ENCODE measurements at regions of chr2 and their contacts with region 1.

Region 1: DNA sequence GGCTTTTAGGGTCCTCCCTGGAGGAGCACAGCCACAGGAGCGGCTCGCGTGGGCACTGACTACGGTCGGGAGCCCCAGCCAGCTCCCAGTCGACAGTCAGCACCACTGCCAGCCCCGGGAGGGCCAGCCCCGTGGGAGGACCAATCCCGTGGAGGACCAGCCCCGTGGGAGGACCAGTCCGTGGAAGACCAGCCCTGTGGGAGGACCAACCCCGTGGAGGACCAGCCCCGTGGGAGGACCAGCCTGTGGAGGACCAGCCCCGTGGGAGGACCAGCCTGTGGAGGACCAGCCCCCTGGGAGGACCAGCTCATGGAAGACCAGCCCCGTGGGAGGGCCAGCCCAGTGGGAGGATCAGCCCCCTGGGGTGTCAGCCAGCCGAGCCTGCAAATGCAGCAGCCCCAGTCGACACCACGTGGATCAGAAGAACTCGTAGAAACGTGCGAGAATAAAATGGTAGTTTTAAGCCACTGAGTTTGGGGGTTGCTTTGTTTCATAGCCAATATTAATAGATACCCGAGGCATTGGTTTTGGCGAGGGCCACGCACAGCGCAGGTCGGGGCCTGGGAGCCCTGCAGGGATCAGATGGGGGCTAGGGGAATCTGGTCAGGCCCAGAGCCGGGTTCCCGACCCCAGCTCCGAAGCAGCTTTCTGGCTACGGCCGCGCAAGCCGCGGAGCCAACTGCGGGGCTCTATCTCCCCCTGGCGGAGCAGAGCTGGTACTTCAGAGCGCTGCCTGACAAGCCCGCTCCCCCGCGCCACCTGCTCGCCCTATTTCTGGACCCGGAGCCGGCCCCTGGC is 73.0 kb downstream of the TEX51 start:
- DNase-seq: peak; percentile 58
- ATAC-seq: peak; percentile 92
- H3K4me3 ChIP-seq: peak overlapping the region; percentile 31 to 65 (median 32); a peak in 5 of 6 replicates
- H3K27ac ChIP-seq: no peak overlapping the region
- H3K4me1 ChIP-seq: peaks cover 63% of the 10 kb centered on the region
- H3K27me3 ChIP-seq: peaks cover 2 to 22% of the 10 kb centered on the region in 2 experiments; a peak in 4 of 5 replicates
- CTCF ChIP-seq: peak; percentile 96
- EP300 ChIP-seq: no peak
- POLR2A ChIP-seq: no peak
- RAD21 ChIP-seq: peak; percentile 99

Region 2: GRCh38 chr2:125745514-125745913 is 1226.2 kb before region 1 on chr2:
- CTCF ChIA-PET with region 1: no interaction called
- POLR2A ChIA-PET with region 1: no interaction called
- in situ Hi-C with region 1: no loop called
- intact Hi-C with region 1: loop called (anchors 10 kb)
- DNase-seq: peak; percentile 49
- ATAC-seq: peak; percentile 94
- H3K4me3 ChIP-seq: no peak overlapping the region
- H3K27ac ChIP-seq: no peak overlapping the region
- H3K4me1 ChIP-seq: no peaks in the 10 kb centered on the region
- H3K27me3 ChIP-seq: no peaks in the 10 kb centered on the region
- CTCF ChIP-seq: peak; percentile 70
- EP300 ChIP-seq: no peak
- POLR2A ChIP-seq: no peak
- RAD21 ChIP-seq: no peak

Region 3: GRCh38 chr2:126227250-126227649 is 744.4 kb before region 1 on chr2:
- CTCF ChIA-PET with region 1: no interaction called
- POLR2A ChIA-PET with region 1: no interaction called
- in situ Hi-C with region 1: no loop called
- intact Hi-C with region 1: loop called (anchors 5 kb)
- DNase-seq: no peak
- ATAC-seq: peak; percentile 71
- H3K4me3 ChIP-seq: no peak overlapping the region
- H3K27ac ChIP-seq: no peak overlapping the region
- H3K4me1 ChIP-seq: no peaks in the 10 kb centered on the region
- H3K27me3 ChIP-seq: no peaks in the 10 kb centered on the region
- CTCF ChIP-seq: peak; percentile 17; the same call in 1 of the 2 replicates
- EP300 ChIP-seq: no peak
- POLR2A ChIP-seq: no peak
- RAD21 ChIP-seq: no peak

Region 4: DNA sequence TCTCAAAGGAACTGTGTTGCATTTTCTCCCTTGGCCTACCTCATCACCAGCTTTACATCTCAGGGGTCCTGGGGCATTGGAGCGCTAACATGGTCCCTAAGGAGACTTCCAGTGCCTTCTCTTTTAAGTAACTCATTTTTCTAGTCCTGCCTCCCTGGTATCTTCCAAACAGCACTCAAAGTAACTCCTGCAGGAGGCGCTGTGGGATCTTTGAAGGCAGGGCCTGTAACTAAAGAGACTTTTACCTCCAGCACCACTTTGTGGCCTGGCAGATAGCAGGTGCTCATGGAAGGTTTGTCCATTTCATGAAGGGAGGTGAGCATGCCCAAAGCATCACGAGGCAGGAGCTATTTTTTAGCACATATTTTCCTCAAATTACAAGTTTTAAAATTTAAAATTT is 726.7 kb before region 1 on chr2:
- CTCF ChIA-PET with region 1: no interaction called
- POLR2A ChIA-PET with region 1: no interaction called
- in situ Hi-C with region 1: no loop called
- intact Hi-C with region 1: loop called (anchors 1 kb)
- DNase-seq: peak; percentile 61
- ATAC-seq: peak; percentile 96
- H3K4me3 ChIP-seq: no peak overlapping the region
- H3K27ac ChIP-seq: no peak overlapping the region
- H3K4me1 ChIP-seq: no peaks in the 10 kb centered on the region
- H3K27me3 ChIP-seq: no peaks in the 10 kb centered on the region
- CTCF ChIP-seq: peak; percentile 75
- EP300 ChIP-seq: no peak
- POLR2A ChIP-seq: no peak
- RAD21 ChIP-seq: peak; percentile 68

Region 5: DNA sequence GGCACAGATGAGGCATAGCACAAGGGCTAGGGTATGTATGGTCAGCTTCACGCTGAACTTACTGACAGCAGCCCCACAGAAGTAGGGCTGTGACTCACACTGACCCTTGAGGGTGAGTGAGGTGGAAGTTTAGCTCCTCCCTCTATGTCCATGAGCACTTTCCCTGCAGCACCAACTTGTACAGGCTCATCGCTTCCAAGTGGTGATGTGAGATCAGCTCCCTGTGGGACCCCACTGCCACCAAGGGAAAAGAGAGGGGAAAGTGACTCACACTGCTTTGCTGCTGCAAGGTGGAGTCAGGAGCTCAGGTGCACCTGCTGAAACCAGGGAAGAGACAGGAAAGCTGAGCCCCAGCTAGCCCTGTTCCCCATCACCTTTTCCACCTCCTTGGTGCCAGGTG is 18.5 kb after region 1 on chr2:
- CTCF ChIA-PET with region 1: interaction called, 3 read pairs
- POLR2A ChIA-PET with region 1: interaction called, 19 read pairs
- in situ Hi-C with region 1: no loop called
- intact Hi-C with region 1: no loop called
- DNase-seq: peak; percentile 15
- ATAC-seq: peak; percentile 76
- H3K4me3 ChIP-seq: peak overlapping the region in 1 of 3 experiments; percentile 60; a peak in 2 of 6 replicates
- H3K27ac ChIP-seq: peak overlapping the region; percentile 84
- H3K4me1 ChIP-seq: peaks cover 95% of the 10 kb centered on the region
- H3K27me3 ChIP-seq: no peaks in the 10 kb centered on the region
- CTCF ChIP-seq: no peak
- EP300 ChIP-seq: no peak
- POLR2A ChIP-seq: 0 out of 4 replicates have a peak, but pooled peaks of 1 of the 2 experiments have one; percentile 20
- RAD21 ChIP-seq: no peak

Region 6: GRCh38 chr2:126995621-126996377 is 24.1 kb after region 1 on chr2:
- CTCF ChIA-PET with region 1: interaction called, 4 read pairs
- POLR2A ChIA-PET with region 1: interaction called, 19 read pairs
- in situ Hi-C with region 1: no loop called
- intact Hi-C with region 1: loop called (anchors 1 kb)
- DNase-seq: peak; percentile 33
- ATAC-seq: peak; percentile 10
- H3K4me3 ChIP-seq: peak overlapping the region in 1 of 3 experiments; percentile 44; a peak in 1 of 6 replicates
- H3K27ac ChIP-seq: peak overlapping the region; percentile 90
- H3K4me1 ChIP-seq: peaks cover 85% of the 10 kb centered on the region
- H3K27me3 ChIP-seq: no peaks in the 10 kb centered on the region
- CTCF ChIP-seq: peak; percentile 42
- EP300 ChIP-seq: no peak
- POLR2A ChIP-seq: peak in 1 of 2 experiments; percentile 42; a peak in 1 of 4 replicates
- RAD21 ChIP-seq: no peak; the same call in 1 of the 2 replicates

Region 7: DNA sequence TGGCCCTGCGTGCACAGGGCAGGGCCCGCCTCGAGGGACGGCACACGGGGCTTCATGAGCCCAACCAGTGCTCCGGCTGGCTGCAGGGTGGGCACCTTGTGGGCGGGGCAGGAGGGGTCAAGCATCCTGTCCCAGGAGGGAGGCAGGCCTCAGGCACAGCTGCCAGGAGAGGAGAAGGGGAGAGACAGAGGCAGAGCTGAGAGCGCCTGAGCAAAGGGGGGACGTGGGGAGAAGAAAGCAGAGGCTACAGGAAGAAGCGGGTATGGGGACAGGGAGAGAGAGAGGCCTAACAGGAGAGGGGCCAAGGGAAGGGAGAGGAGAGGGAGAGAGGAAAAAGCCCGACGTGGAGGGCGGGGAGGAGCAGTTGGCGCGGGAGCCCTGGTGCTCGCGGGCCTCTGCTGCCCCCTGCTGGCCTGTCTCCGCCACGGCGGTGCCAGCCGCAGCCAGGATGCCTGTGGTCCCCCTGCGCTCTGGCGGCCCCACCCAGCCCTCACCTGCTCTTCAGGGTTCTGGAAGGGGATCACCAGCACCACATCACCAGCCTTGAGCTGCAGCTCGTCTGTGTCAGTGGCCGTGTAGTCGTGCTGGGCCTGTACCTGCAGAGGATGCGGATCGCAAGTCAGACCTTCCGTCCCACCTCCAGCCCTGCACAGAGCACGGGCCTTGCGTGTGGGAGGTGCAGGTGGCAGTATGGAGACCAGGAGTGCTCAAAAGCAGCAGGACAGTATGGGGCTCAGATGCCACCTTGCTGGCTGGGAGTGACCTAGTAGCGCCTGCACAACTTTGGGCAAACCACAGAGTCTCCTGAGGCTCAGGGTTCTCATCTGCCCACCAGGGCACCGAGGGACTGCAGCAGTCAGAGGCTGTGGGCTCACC is 78.5 kb after region 1 on chr2:
- CTCF ChIA-PET with region 1: interaction called, 3 read pairs
- POLR2A ChIA-PET with region 1: no interaction called
- in situ Hi-C with region 1: no loop called
- intact Hi-C with region 1: loop called (anchors 1 kb)
- DNase-seq: peak; percentile 24
- ATAC-seq: peak; percentile 86
- H3K4me3 ChIP-seq: peak overlapping the region in 1 of 3 experiments; percentile 27; a peak in 1 of 6 replicates
- H3K27ac ChIP-seq: no peak overlapping the region
- H3K4me1 ChIP-seq: peaks cover 12% of the 10 kb centered on the region
- H3K27me3 ChIP-seq: peaks cover 0 to 5% of the 10 kb centered on the region in 2 experiments; a peak in 2 of 5 replicates
- CTCF ChIP-seq: peak; percentile 99
- EP300 ChIP-seq: no peak
- POLR2A ChIP-seq: no peak
- RAD21 ChIP-seq: peak; percentile 96